Endothelial cell of umbilical vein (primary cell): ENCODE measurements at regions of chr10 and their contacts with region 1.

Region 1: DNA sequence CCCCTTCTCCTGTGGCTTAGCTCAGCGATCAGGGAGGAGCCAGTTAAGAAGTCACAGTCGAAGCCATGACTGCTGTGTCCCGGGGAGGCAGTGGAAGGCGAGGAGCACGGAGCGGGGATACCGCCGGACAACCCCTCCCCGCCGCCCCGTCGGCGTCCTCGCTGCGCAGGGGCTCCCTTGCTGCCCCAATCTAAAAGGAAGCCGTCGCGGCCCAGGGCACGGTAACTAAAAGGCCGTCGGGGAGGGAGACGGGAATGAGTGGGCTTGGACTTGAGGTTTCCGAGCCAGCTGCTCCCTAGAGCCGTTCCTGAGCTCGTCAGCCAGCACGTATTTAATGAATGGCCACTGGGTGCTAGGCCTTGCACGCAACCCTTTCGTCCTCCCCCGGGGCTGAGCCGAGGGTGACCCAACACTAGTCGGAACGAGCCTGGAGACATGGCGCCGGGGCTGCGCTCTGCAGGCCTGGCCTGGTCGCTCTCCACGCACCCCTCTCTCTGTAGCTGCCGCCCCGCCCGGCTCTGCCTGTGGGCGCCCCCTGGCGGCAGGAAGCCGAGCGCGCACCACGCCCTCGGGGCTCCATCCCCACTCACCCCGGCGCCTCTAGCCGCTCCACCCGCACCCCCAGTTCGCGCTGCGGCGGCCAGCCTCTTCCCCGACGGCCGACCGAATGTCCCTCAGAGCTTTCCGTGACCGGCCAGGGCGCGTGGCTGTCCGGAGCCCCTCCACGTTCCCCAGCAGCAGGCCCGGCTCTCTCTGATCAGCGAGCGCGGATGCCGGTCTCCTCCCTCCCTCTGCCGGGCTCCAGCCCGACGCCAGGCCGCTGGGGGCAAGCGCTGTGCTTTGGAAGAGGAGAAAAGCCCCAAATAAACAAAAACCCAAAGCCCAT is 29.3 kb upstream of the KCNK18 start:
- DNase-seq: peak; percentile 27
- H3K4me3 ChIP-seq: no peak overlapping the region
- H3K27ac ChIP-seq: no peak overlapping the region
- H3K4me1 ChIP-seq: peaks cover 3% of the 10 kb centered on the region
- H3K27me3 ChIP-seq: peaks cover 82 to 91% of the 10 kb centered on the region in 2 experiments
- CTCF ChIP-seq: peak; percentile 90 to 93
- POLR2A ChIP-seq: no peak

Region 2: GRCh38 chr10:116796910-116797513 is 371.0 kb before region 1 on chr10:
- CTCF ChIA-PET with region 1: interaction called, 344 read pairs
- POLR2A ChIA-PET with region 1: interaction called, 3 read pairs
- dilution Hi-C with region 1: loop called (anchors 25 kb)
- intact Hi-C with region 1: loop called (anchors 1 kb)
- DNase-seq: peak; percentile 69
- H3K4me3 ChIP-seq: no peak overlapping the region
- H3K27ac ChIP-seq: no peak overlapping the region
- H3K4me1 ChIP-seq: no peaks in the 10 kb centered on the region
- H3K27me3 ChIP-seq: no peaks in the 10 kb centered on the region
- CTCF ChIP-seq: peak; percentile 89 to 95
- POLR2A ChIP-seq: no peak

Region 3: DNA sequence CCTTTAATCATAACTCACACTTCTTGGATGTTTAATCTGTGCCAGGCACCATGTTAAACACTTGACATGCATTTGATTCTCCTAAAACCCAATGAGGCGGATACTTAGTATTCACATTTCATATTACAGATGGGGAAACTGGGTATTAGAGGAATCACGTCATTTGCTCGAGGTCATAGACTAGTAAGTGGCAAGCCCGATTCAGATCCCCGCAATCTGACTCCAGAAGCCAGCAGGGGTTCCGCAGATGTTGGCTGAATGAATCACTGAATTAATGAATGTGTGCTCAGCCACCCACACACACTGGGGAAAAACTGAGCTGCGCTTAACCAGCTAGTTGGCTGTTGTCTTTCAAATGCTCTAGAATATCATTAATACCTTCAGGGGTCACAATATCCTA is 341.2 kb before region 1 on chr10:
- CTCF ChIA-PET with region 1: interaction called, 12 read pairs
- POLR2A ChIA-PET with region 1: no interaction called
- dilution Hi-C with region 1: loop called (anchors 25 kb)
- intact Hi-C with region 1: no loop called
- DNase-seq: no peak
- H3K4me3 ChIP-seq: no peak overlapping the region
- H3K27ac ChIP-seq: no peak overlapping the region
- H3K4me1 ChIP-seq: no peaks in the 10 kb centered on the region
- H3K27me3 ChIP-seq: no peaks in the 10 kb centered on the region
- CTCF ChIP-seq: no peak
- POLR2A ChIP-seq: no peak

Region 4: GRCh38 chr10:116836902-116837523 is 331.0 kb before region 1 on chr10:
- CTCF ChIA-PET with region 1: interaction called, 238 read pairs
- POLR2A ChIA-PET with region 1: no interaction called
- dilution Hi-C with region 1: no loop called
- intact Hi-C with region 1: loop called (anchors 1 kb)
- DNase-seq: peak; percentile 44
- H3K4me3 ChIP-seq: no peak overlapping the region
- H3K27ac ChIP-seq: no peak overlapping the region
- H3K4me1 ChIP-seq: no peaks in the 10 kb centered on the region
- H3K27me3 ChIP-seq: peaks cover 13 to 18% of the 10 kb centered on the region in 2 experiments
- CTCF ChIP-seq: peak; percentile 31 to 38
- POLR2A ChIP-seq: no peak

Region 5: DNA sequence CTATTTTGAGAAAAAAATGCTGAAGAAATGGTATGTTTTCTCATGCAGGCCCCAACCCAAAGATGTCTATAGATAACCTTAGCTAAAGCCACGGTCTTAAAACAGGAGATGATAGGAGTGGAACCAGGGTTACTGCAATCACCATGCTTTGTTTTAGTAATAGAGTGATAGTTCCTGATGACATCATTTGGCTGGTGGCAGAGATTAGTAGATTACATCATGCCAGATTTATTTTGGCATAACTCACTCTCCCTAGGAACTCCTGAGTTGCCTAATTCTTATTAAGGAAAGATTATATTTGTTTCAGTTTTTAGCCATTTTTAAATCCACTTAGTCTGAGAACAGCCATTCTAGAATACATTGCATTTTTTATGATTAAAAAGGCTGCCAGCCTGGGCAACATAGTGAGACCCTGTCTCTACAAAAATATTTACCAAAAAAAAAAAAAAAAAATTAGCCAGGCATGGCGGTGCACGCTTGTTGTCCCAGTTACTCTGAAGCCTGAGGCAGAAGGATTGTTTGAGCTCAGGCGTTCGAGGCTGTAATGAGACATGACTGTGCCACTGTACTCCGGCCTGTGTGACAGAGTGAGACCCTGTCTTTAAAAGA is 300.9 kb before region 1 on chr10:
- CTCF ChIA-PET with region 1: no interaction called
- POLR2A ChIA-PET with region 1: no interaction called
- dilution Hi-C with region 1: no loop called
- intact Hi-C with region 1: no loop called
- DNase-seq: no peak
- H3K4me3 ChIP-seq: no peak overlapping the region
- H3K27ac ChIP-seq: no peak overlapping the region
- H3K4me1 ChIP-seq: no peaks in the 10 kb centered on the region
- H3K27me3 ChIP-seq: peaks cover 0 to 5% of the 10 kb centered on the region in 2 experiments
- CTCF ChIP-seq: no peak
- POLR2A ChIP-seq: no peak

Region 6: GRCh38 chr10:116926426-116926825 is 241.6 kb before region 1 on chr10:
- CTCF ChIA-PET with region 1: no interaction called
- POLR2A ChIA-PET with region 1: no interaction called
- dilution Hi-C with region 1: no loop called
- intact Hi-C with region 1: no loop called
- DNase-seq: no peak
- H3K4me3 ChIP-seq: no peak overlapping the region
- H3K27ac ChIP-seq: no peak overlapping the region
- H3K4me1 ChIP-seq: no peaks in the 10 kb centered on the region
- H3K27me3 ChIP-seq: no peaks in the 10 kb centered on the region
- CTCF ChIP-seq: no peak
- POLR2A ChIP-seq: no peak

Region 7: DNA sequence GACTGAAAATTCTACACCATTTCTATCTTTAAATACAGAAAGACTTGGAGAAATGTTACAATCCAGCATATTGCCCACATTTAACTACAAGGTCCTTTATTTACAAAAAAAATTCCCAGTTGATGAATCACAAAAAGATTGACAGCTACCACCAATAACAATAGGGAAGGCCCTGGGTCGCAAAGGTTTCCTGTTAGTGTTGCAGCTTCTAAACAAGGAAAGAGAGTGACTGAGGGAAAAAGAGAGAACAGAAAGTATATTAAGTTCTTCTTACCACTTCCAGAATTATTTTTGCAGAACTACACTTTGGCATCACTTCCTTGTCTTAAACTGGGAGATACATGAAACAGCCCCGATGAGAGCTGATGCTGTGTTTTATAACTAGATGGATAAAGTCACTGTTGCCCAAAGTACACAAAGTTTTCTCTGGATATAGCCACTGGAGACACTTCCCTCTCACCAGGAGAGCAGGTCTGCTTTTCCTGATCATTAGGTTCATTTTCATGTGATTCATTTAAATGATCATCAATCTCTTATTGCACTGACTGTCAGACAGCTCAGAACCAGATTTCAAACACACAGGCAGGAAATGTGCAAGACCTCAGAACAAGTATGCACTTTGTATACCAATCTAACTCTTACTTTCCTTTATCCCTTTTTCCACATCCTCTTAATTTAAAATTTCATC is 220.0 kb before region 1 on chr10:
- CTCF ChIA-PET with region 1: interaction called, 10 read pairs
- POLR2A ChIA-PET with region 1: no interaction called
- dilution Hi-C with region 1: no loop called
- intact Hi-C with region 1: loop called (anchors 5 kb)
- DNase-seq: peak; percentile 88
- H3K4me3 ChIP-seq: peak overlapping the region in 2 of 3 experiments; percentile 6 to 8
- H3K27ac ChIP-seq: peak overlapping the region; percentile 88
- H3K4me1 ChIP-seq: peaks cover 23% of the 10 kb centered on the region
- H3K27me3 ChIP-seq: no peaks in the 10 kb centered on the region
- CTCF ChIP-seq: no peak
- POLR2A ChIP-seq: no peak

Region 8: GRCh38 chr10:117112220-117112619 is 55.8 kb before region 1 on chr10:
- CTCF ChIA-PET with region 1: interaction called, 20 read pairs
- POLR2A ChIA-PET with region 1: no interaction called
- dilution Hi-C with region 1: no loop called
- intact Hi-C with region 1: no loop called
- DNase-seq: no peak
- H3K4me3 ChIP-seq: no peak overlapping the region
- H3K27ac ChIP-seq: no peak overlapping the region
- H3K4me1 ChIP-seq: no peaks in the 10 kb centered on the region
- H3K27me3 ChIP-seq: peaks cover 0 to 3% of the 10 kb centered on the region in 2 experiments
- CTCF ChIP-seq: peak in 1 of 2 donors; percentile 27
- POLR2A ChIP-seq: no peak

Region 9: GRCh38 chr10:117137031-117137910 is 30.8 kb before region 1 on chr10:
- CTCF ChIA-PET with region 1: interaction called, 23 read pairs
- POLR2A ChIA-PET with region 1: no interaction called
- dilution Hi-C with region 1: no loop called
- intact Hi-C with region 1: loop called (anchors 2 kb)
- DNase-seq: peak; percentile 22
- H3K4me3 ChIP-seq: peak overlapping the region in 2 of 3 experiments; percentile 15 to 26
- H3K27ac ChIP-seq: no peak overlapping the region
- H3K4me1 ChIP-seq: peaks cover 10% of the 10 kb centered on the region
- H3K27me3 ChIP-seq: peaks cover 73 to 94% of the 10 kb centered on the region in 2 experiments
- CTCF ChIP-seq: no peak
- POLR2A ChIP-seq: no peak

Region 10: DNA sequence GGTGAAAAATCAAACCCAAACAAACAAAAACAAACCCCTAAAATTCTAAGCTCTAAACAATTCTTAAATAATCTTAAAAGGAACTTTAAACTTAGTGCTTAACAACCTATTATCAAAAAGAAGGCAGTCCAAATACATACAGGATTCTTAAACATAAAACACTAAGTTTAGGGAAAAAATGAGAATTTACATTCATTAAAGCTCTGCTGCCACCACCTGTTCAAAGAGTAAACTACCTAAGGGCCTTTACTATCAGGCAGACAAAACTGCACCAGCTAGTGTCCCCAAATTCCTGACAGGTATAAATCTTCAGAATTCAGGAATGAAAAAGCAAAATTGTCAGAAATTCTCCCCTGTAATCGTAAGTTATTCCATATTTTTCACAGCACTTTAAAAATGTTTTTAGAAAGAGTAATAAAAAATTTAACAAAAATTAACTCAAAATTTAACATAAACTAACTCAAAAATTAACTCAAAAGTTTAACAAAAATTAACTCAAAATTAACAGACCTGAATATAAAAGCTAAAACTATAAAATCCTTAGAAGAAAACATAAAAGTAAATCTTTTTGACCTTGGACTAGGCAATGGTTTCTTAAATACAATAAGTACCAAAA is 152.1 kb after region 1 on chr10:
- CTCF ChIA-PET with region 1: no interaction called
- POLR2A ChIA-PET with region 1: no interaction called
- dilution Hi-C with region 1: no loop called
- intact Hi-C with region 1: no loop called
- DNase-seq: peak; percentile 37
- H3K4me3 ChIP-seq: no peak overlapping the region
- H3K27ac ChIP-seq: no peak overlapping the region
- H3K4me1 ChIP-seq: no peaks in the 10 kb centered on the region
- H3K27me3 ChIP-seq: no peaks in the 10 kb centered on the region
- CTCF ChIP-seq: peak; percentile 32 to 39
- POLR2A ChIP-seq: no peak